ENCODE measurements at regions of chr7 and their contacts with region 1.

Region 1: DNA sequence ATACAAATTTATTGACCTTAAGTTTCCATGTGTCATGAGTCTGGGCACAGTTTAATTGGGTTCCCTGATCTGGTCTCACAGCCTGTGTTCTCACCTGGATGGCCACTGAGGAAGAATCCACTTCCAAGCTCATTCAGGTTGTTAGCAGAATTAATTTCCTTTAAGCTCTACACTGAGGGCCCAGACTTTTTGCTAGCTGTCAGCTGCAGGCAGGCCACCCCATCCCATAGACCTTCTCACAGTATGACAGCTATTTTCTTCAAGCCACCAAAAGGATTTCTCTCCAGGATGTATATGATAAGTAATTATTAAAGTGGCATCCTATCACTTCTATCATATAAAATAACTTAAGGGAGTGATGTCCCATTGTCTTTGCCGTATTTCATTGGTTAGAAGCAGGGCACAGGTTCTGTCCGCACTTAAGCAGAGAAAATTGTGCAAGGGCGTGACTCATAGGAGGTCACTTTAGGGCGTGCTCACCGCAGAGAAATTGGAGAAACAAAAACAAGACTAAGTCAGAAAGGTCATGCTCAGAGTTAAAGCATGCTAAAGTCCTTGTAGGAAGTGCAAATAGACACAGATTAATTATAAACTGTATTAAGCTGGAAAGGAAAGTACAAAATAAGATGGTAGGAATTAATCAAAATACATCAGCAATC is 109.9 kb downstream of the AHR start:
- DNase-seq: peak; percentile 79 to 97
- H3K4me3 ChIP-seq: peak overlapping the region; percentile 4; the same call in 1 of the 2 replicates
- H3K27ac ChIP-seq: peak overlapping the region; percentile 73
- H3K4me1 ChIP-seq: peaks cover 57% of the 10 kb centered on the region
- H3K27me3 ChIP-seq: no peaks in the 10 kb centered on the region
- CTCF ChIP-seq: no peak

Region 2: GRCh38 chr7:17422966-17423365 is 14.6 kb after region 1 on chr7:
- CTCF ChIA-PET with region 1: no interaction called
- POLR2A ChIA-PET with region 1: interaction called, 10 read pairs
- intact Hi-C with region 1: no loop called
- DNase-seq: no peak
- H3K4me3 ChIP-seq: no peak overlapping the region
- H3K27ac ChIP-seq: no peak overlapping the region
- H3K4me1 ChIP-seq: no peaks in the 10 kb centered on the region
- H3K27me3 ChIP-seq: no peaks in the 10 kb centered on the region
- CTCF ChIP-seq: no peak

Region 3: GRCh38 chr7:17523813-17524741 is 115.7 kb after region 1 on chr7:
- CTCF ChIA-PET with region 1: no interaction called
- POLR2A ChIA-PET with region 1: no interaction called
- intact Hi-C with region 1: loop called (anchors 5 kb)
- DNase-seq: peak; percentile 64 to 94
- H3K4me3 ChIP-seq: no peak overlapping the region
- H3K27ac ChIP-seq: peak overlapping the region; percentile 24
- H3K4me1 ChIP-seq: peaks cover 12% of the 10 kb centered on the region
- H3K27me3 ChIP-seq: no peaks in the 10 kb centered on the region
- CTCF ChIP-seq: no peak

Region 4: DNA sequence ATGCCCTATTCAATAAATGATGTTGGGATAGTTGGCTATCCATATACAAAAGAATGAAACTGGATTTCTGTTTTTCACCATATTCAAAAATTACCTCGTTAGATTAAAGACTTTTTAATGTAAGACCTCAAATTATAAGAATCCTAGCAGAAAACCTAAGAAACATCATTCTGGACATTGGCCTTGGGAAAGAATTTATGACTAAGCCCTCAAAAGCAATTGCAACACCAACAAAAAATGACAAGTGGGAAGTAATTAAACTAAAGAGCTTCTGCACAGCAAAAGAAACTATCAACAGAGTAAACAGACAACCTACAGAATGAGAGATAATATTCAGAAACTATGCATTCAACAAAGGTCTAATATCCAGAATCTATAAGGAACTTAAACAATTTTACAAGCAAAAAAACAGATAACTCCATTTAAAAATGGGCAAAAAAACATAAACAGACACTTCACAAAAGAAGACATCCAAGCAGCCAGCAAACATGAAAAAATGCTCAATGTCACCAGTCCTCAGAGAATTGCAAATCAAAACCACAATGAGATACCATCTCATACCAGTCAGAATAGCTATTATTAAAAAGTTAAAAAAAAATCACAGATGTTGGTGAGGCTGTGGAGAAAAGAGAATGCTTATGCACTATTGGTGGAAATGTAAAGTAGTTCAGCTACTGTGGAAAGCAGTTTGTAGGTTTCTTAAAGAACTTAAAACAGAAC is 199.9 kb after region 1 on chr7:
- CTCF ChIA-PET with region 1: no interaction called
- POLR2A ChIA-PET with region 1: no interaction called
- intact Hi-C with region 1: loop called (anchors 2 kb)
- DNase-seq: peak in 1 of 2 experiments; percentile 85
- H3K4me3 ChIP-seq: no peak overlapping the region
- H3K27ac ChIP-seq: peak overlapping the region; percentile 62
- H3K4me1 ChIP-seq: peaks cover 29% of the 10 kb centered on the region
- H3K27me3 ChIP-seq: no peaks in the 10 kb centered on the region
- CTCF ChIP-seq: no peak

Region 5: GRCh38 chr7:17725796-17726195 is 317.4 kb after region 1 on chr7:
- CTCF ChIA-PET with region 1: no interaction called
- POLR2A ChIA-PET with region 1: no interaction called
- intact Hi-C with region 1: no loop called
- DNase-seq: no peak
- H3K4me3 ChIP-seq: no peak overlapping the region
- H3K27ac ChIP-seq: no peak overlapping the region
- H3K4me1 ChIP-seq: no peaks in the 10 kb centered on the region
- H3K27me3 ChIP-seq: no peaks in the 10 kb centered on the region
- CTCF ChIP-seq: no peak

Region 6: GRCh38 chr7:17802056-17802455 is 393.7 kb after region 1 on chr7:
- CTCF ChIA-PET with region 1: no interaction called
- POLR2A ChIA-PET with region 1: interaction called, 17 read pairs
- intact Hi-C with region 1: no loop called
- DNase-seq: no peak
- H3K4me3 ChIP-seq: no peak overlapping the region
- H3K27ac ChIP-seq: no peak overlapping the region
- H3K4me1 ChIP-seq: no peaks in the 10 kb centered on the region
- H3K27me3 ChIP-seq: no peaks in the 10 kb centered on the region
- CTCF ChIP-seq: no peak